Mucosa of descending colon (tissue), 3 donors: ENCODE measurements at regions of chr9 and their contacts with region 1.

Region 1: GRCh38 chr9:70382709-70383605 is 31.5 kb downstream of the KLF9 start:
- DNase-seq: peak in 1 of 3 donors; percentile 18
- ATAC-seq: peak; percentile 67
- H3K4me3 ChIP-seq: no peak overlapping the region
- H3K4me1 ChIP-seq: no peaks in the 10 kb centered on the region
- CTCF ChIP-seq: no peak

Region 2: GRCh38 chr9:70156729-70157128 is 226.2 kb before region 1 on chr9:
- intact Hi-C with region 1: no loop called
- DNase-seq: no peak
- ATAC-seq: no peak
- H3K4me3 ChIP-seq: no peak overlapping the region
- H3K4me1 ChIP-seq: no peaks in the 10 kb centered on the region
- CTCF ChIP-seq: no peak

Region 3: DNA sequence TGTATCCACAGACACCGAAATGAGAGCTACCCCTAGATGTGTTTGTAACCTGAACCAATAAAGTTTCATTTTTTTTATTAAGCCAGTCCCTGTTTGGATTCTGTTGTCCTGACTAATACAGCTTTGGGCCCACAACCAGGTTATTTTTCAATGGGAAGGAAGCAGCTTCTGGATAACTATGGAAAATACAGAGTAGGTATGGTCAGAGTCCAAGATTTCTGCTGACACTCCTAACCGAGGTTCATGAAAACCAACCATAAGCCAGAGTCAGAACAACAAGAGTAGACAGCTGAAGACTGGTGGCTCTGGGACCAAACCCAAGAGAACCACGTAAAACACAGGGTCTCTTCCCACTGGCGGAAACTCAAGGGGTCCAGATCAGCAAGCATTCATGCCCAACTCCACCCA is 20.7 kb after region 1 on chr9:
- intact Hi-C with region 1: loop called in 1 of 2 experiments (anchors 2 kb)
- DNase-seq: peak in 1 of 3 donors; percentile 22
- ATAC-seq: peak; percentile 44
- H3K4me3 ChIP-seq: no peak overlapping the region
- H3K4me1 ChIP-seq: peaks cover 72% of the 10 kb centered on the region
- CTCF ChIP-seq: no peak